GM23248 (cell line): ENCODE measurements at regions of chr22 and their contacts with region 1.

Region 1: GRCh38 chr22:35914665-35915476 is 113.8 kb downstream of the RBFOX2 start:
- DNase-seq: peak; percentile 92
- H3K4me3 ChIP-seq: peak overlapping the region; percentile 77
- H3K27ac ChIP-seq: peak overlapping the region; percentile 76
- H3K4me1 ChIP-seq: peaks cover 33% of the 10 kb centered on the region
- H3K27me3 ChIP-seq: no peaks in the 10 kb centered on the region

Region 2: GRCh38 chr22:35627264-35628041 is 287.4 kb before region 1 on chr22:
- in situ Hi-C with region 1: loop called (anchors 10 kb)
- DNase-seq: peak; percentile 89
- H3K4me3 ChIP-seq: peak overlapping the region; percentile 75
- H3K27ac ChIP-seq: peak overlapping the region; percentile 98
- H3K4me1 ChIP-seq: peaks cover 23% of the 10 kb centered on the region
- H3K27me3 ChIP-seq: no peaks in the 10 kb centered on the region

Region 3: DNA sequence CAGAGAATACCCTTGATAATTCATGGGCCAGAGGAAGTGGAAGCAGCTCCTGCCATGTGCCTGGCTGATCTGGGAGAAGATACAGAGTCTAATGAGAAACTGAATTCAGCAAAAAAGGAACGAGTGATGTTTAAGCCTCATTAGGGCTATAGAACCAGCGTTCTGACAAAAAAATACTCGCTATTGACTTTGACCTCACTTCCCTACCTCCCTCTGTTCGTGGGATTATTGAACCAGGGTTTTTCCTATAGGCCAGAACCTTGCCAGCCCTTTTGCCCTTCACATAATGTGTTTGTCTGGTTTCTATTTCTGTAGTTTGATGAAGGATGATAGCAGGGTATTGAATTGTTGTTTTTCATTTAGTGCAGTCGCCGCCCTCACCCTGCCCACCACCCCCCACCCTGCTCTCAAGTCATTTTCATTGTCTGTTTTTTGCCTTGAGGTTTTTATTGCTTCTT is 121.3 kb after region 1 on chr22:
- in situ Hi-C with region 1: no loop called
- DNase-seq: no peak
- H3K4me3 ChIP-seq: no peak overlapping the region
- H3K27ac ChIP-seq: no peak overlapping the region
- H3K4me1 ChIP-seq: no peaks in the 10 kb centered on the region
- H3K27me3 ChIP-seq: no peaks in the 10 kb centered on the region